MCF 10A (cell line): ENCODE measurements at regions of chr17 and their contacts with region 1.

Region 1: GRCh38 chr17:42027961-42028790 is 8.3 kb downstream of the NKIRAS2 start:
- DNase-seq: no peak
- H3K4me3 Mint-ChIP-seq: no peak overlapping the region
- H3K27ac Mint-ChIP-seq: no peak overlapping the region
- H3K4me1 Mint-ChIP-seq: peaks cover 6% of the 10 kb centered on the region
- H3K27me3 Mint-ChIP-seq: no peaks in the 10 kb centered on the region
- CTCF ChIP-seq: no peak

Region 2: GRCh38 chr17:42101513-42102319 is 73.5 kb after region 1 on chr17:
- CTCF ChIA-PET with region 1: interaction called, 5 read pairs
- POLR2A ChIA-PET with region 1: no interaction called
- intact Hi-C with region 1: loop called (anchors 1 kb)
- DNase-seq: peak; percentile 69
- H3K4me3 Mint-ChIP-seq: no peak overlapping the region
- H3K27ac Mint-ChIP-seq: no peak overlapping the region
- H3K4me1 Mint-ChIP-seq: no peaks in the 10 kb centered on the region
- H3K27me3 Mint-ChIP-seq: no peaks in the 10 kb centered on the region
- CTCF ChIP-seq: peak; percentile 90

Region 3: DNA sequence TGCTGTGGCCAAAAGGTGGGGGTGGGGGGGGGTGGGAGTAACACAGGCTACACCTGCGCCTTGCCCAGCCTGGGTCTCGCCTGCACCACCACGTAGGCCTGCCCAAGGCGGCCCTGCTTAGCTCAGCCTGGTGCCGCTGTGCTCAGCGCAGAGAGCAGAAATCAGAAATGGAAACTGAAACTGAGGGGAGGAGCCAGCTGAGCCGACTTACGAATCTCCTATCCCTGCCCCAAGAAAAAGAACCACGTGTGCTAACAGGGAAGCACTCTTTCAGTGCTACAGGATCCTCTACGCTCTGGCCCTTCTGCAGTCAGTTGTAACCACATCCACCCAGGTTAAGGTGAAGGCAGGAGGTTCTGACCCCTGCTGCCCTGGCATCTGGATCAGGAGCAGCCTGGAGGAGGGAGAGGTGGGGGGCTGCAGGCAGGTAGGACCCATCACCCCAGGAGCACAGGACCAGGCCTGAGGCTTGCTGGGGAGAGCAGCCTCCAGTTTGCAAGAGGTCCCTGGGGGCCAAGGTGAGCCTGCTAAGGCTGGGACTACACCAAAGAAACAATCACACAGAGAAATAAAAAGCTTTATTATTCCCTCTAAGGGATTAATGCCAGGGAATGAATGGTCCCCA is 84.5 kb after region 1 on chr17 and contains the start of gene DHX58:
- CTCF ChIA-PET with region 1: interaction called, 40 read pairs
- POLR2A ChIA-PET with region 1: interaction called, 3 read pairs
- intact Hi-C with region 1: loop called (anchors 1 kb)
- DNase-seq: peak; percentile 64
- H3K4me3 Mint-ChIP-seq: peak within 1 kb of the TSS; percentile 67
- H3K27ac Mint-ChIP-seq: peak within 1 kb of the TSS; percentile 35
- H3K4me1 Mint-ChIP-seq: no peaks in the 10 kb centered on the region
- H3K27me3 Mint-ChIP-seq: no peaks in the 10 kb centered on the region
- CTCF ChIP-seq: no peak
- total RNA-seq, gene DHX58: 2.8 and 4.2 TPM in 2 replicates